ENCODE measurements at regions of chr3 and their contacts with region 1.

Region 1: GRCh38 chr3:108477511-108478147 is 32.8 kb downstream of the MYH15 start:
- DNase-seq: peak; percentile 84
- H3K4me3 ChIP-seq: no peak overlapping the region
- H3K27ac ChIP-seq: no peak overlapping the region
- H3K4me1 ChIP-seq: peaks cover 8% of the 10 kb centered on the region
- H3K27me3 ChIP-seq: no peaks in the 10 kb centered on the region
- CTCF ChIP-seq: peak; percentile 80

Region 2: GRCh38 chr3:107676469-107677309 is 800.9 kb before region 1 on chr3:
- CTCF ChIA-PET with region 1: no interaction called
- POLR2A ChIA-PET with region 1: no interaction called
- intact Hi-C with region 1: loop called (anchors 10 kb)
- DNase-seq: peak; percentile 61
- H3K4me3 ChIP-seq: no peak overlapping the region
- H3K27ac ChIP-seq: no peak overlapping the region
- H3K4me1 ChIP-seq: no peaks in the 10 kb centered on the region
- H3K27me3 ChIP-seq: no peaks in the 10 kb centered on the region
- CTCF ChIP-seq: peak; percentile 69

Region 3: GRCh38 chr3:107855708-107856107 is 621.9 kb before region 1 on chr3:
- CTCF ChIA-PET with region 1: no interaction called
- POLR2A ChIA-PET with region 1: no interaction called
- intact Hi-C with region 1: loop called (anchors 10 kb)
- DNase-seq: peak; percentile 62
- H3K4me3 ChIP-seq: no peak overlapping the region
- H3K27ac ChIP-seq: no peak overlapping the region
- H3K4me1 ChIP-seq: no peaks in the 10 kb centered on the region
- H3K27me3 ChIP-seq: no peaks in the 10 kb centered on the region
- CTCF ChIP-seq: peak; percentile 70

Region 4: GRCh38 chr3:107938143-107938542 is 539.5 kb before region 1 on chr3:
- CTCF ChIA-PET with region 1: no interaction called
- POLR2A ChIA-PET with region 1: no interaction called
- intact Hi-C with region 1: loop called (anchors 5 kb)
- DNase-seq: peak; percentile 53
- H3K4me3 ChIP-seq: no peak overlapping the region
- H3K27ac ChIP-seq: no peak overlapping the region
- H3K4me1 ChIP-seq: no peaks in the 10 kb centered on the region
- H3K27me3 ChIP-seq: peaks cover 9% of the 10 kb centered on the region
- CTCF ChIP-seq: peak; percentile 59

Region 5: GRCh38 chr3:108153451-108153981 is 324.1 kb before region 1 on chr3:
- CTCF ChIA-PET with region 1: interaction called, 12 read pairs
- POLR2A ChIA-PET with region 1: no interaction called
- intact Hi-C with region 1: loop called (anchors 1 kb)
- DNase-seq: peak; percentile 89
- H3K4me3 ChIP-seq: no peak overlapping the region
- H3K27ac ChIP-seq: no peak overlapping the region
- H3K4me1 ChIP-seq: no peaks in the 10 kb centered on the region
- H3K27me3 ChIP-seq: no peaks in the 10 kb centered on the region
- CTCF ChIP-seq: peak; percentile 79

Region 6: DNA sequence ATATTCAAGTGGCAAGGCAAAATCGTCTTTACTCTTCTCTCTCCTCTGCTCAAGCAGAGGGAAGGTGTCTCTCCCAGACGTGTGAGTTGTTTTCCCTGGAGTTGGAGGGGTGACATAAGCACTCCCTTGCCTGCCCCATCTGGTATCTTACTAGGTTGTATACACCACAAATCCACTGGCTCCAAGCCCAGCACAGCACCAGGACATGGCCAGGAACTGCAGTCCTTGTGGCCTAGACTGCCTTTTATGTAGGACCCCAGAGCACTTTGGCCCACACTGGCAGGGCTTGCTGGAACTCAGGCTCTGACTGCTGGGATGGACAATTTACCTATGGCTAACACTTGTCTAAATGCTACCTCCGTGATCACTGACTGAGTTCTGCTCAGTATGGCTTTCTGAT is 145.9 kb after region 1 on chr3:
- CTCF ChIA-PET with region 1: no interaction called
- POLR2A ChIA-PET with region 1: no interaction called
- intact Hi-C with region 1: no loop called
- DNase-seq: no peak
- H3K4me3 ChIP-seq: no peak overlapping the region
- H3K27ac ChIP-seq: no peak overlapping the region
- H3K4me1 ChIP-seq: no peaks in the 10 kb centered on the region
- H3K27me3 ChIP-seq: no peaks in the 10 kb centered on the region
- CTCF ChIP-seq: no peak